ENCODE measurements at regions of chr2 and their contacts with region 1.

Region 1: GRCh38 chr2:9813312-9814133 is 29.8 kb upstream of the TAF1B start:
- DNase-seq: peak; percentile 74
- H3K4me3 ChIP-seq: no peak overlapping the region
- H3K27ac ChIP-seq: no peak overlapping the region
- H3K4me1 ChIP-seq: peaks cover 4 to 17% (median 12%) of the 10 kb centered on the region in 4 donors
- H3K27me3 ChIP-seq: no peaks in the 10 kb centered on the region
- CTCF ChIP-seq: peak; percentile 86 to 94 (median 90)
- EP300 ChIP-seq: no peak
- POLR2A ChIP-seq: no peak

Region 2: GRCh38 chr2:10057231-10058107 is 243.9 kb after region 1 on chr2:
- in situ Hi-C with region 1: loop called in 2 of 4 experiments (anchors 10 to 25 kb)
- intact Hi-C with region 1: no loop called
- DNase-seq: peak; percentile 58
- H3K4me3 ChIP-seq: peak overlapping the region in 3 of 4 donors; percentile 11 to 30 (median 19)
- H3K27ac ChIP-seq: peak overlapping the region; percentile 63 to 73 (median 68)
- H3K4me1 ChIP-seq: peaks cover 13 to 20% (median 15%) of the 10 kb centered on the region in 4 donors
- H3K27me3 ChIP-seq: no peaks in the 10 kb centered on the region
- CTCF ChIP-seq: no peak
- EP300 ChIP-seq: no peak
- POLR2A ChIP-seq: no peak

Region 3: DNA sequence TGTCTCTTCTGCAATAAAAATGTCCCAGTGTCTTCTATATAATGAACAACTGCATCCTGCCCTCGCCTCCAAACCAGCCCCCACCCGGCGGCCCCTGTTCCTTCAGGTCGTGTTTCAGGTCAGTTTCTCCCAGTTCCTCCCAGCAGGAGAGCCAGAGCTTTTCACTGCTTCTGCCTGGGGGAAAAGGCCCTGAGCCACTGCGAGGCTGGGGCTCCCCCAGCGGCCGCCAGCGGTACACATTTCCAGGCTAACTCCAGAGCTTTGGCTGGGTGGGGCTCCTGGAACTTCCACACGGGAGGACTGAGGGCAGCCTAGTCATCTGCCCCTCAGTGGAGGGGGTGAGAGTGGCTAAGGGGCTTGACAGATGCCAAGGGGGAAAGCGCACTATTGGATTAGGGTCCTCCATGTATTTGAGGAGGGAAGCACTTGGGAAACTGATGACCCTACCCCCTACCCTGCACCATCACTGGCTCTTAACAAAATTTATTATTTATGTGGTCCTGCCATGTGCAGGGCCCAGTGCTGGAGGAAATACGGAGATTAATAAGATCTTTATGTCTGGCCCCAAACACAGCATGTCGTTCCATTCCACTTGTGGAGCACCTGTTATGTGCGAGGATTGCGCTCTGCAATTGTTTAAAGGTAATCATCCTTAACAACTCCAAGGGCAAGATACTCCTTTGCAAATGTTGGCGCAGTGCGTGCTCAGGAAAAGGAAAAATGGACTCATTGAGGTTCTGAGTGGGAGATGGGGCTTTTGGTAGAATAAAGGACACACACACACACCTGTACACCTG is 284.0 kb after region 1 on chr2:
- in situ Hi-C with region 1: no loop called
- intact Hi-C with region 1: loop called (anchors 1 kb)
- DNase-seq: peak; percentile 75
- H3K4me3 ChIP-seq: no peak overlapping the region
- H3K27ac ChIP-seq: no peak overlapping the region
- H3K4me1 ChIP-seq: peaks cover 0 to 8% (median 0%) of the 10 kb centered on the region in 4 donors
- H3K27me3 ChIP-seq: peaks cover 6% of the 10 kb centered on the region
- CTCF ChIP-seq: peak; percentile 86 to 95 (median 89)
- EP300 ChIP-seq: no peak
- POLR2A ChIP-seq: no peak